ENCODE measurements at regions of chr14 and their contacts with region 1.

Region 1: GRCh38 chr14:56474419-56475022 is 105.1 kb upstream of the TMEM260 start:
- DNase-seq: peak in 1 of 2 experiments; percentile 59
- H3K4me3 ChIP-seq: no peak overlapping the region
- H3K4me3 Mint-ChIP-seq: no peak overlapping the region
- H3K27ac Mint-ChIP-seq: no peak overlapping the region
- H3K4me1 ChIP-seq: no peaks in the 10 kb centered on the region
- H3K4me1 Mint-ChIP-seq: no peaks in the 10 kb centered on the region
- H3K27me3 ChIP-seq: no peaks in the 10 kb centered on the region
- H3K27me3 Mint-ChIP-seq: peaks cover 23% of the 10 kb centered on the region
- CTCF ChIP-seq: peak; percentile 73 to 76

Region 2: GRCh38 chr14:55707365-55707804 is 767.1 kb before region 1 on chr14:
- CTCF ChIA-PET with region 1: interaction called, 11 read pairs
- POLR2A ChIA-PET with region 1: no interaction called
- intact Hi-C with region 1: loop called (anchors 2 kb)
- DNase-seq: peak in 1 of 2 experiments; percentile 32
- H3K4me3 ChIP-seq: no peak overlapping the region
- H3K4me3 Mint-ChIP-seq: no peak overlapping the region
- H3K27ac Mint-ChIP-seq: no peak overlapping the region
- H3K4me1 ChIP-seq: peaks cover 4% of the 10 kb centered on the region; the same call in 1 of the 2 replicates
- H3K4me1 Mint-ChIP-seq: no peaks in the 10 kb centered on the region
- H3K27me3 ChIP-seq: no peaks in the 10 kb centered on the region
- H3K27me3 Mint-ChIP-seq: no peaks in the 10 kb centered on the region
- CTCF ChIP-seq: peak; percentile 53 to 65

Region 3: DNA sequence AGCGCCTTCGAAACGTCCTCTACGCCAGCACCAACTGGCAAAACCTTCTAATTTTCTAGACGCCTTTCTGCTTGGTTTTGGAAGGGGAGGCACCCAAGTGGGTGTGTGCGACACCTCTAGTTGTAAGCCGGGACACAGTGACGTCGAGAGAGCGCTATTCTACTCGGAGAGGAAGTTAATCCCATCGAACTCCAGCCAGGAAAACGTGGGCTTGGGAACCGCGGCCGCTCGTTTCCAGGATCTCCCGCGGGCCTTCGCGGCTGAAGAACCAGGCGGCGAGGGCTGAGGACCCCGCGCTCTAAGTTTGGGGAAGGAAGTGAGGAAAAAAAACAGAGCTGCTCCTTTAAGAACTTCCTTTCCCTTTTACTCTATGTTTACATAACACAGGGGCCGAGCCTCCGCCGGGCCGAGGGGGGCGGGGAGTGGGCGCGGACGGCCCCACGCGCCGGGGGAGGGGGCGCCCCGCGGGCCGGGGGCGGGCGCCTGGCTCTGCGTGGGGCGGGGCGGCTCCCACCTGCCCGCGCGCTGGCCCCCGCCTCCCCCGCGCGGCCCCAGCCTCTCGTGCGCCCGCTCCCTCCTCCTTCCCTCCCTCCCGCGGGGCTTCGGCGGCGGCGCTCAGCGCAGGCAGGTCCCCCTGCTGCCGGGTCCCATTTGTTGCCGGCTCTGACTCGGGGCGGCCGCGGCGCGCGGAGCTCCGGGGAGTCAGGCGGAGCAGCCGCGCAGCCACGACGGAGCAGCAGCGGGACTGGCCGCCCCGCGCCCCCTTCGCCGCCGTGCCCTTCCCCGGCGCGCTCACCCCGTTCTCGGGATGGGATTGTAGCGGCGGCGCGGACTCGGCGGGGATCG is 356.5 kb before region 1 on chr14 and contains the start of gene PELI2:
- CTCF ChIA-PET with region 1: no interaction called
- POLR2A ChIA-PET with region 1: no interaction called
- intact Hi-C with region 1: loop called (anchors 10 kb)
- DNase-seq: peak; percentile 67 to 85
- H3K4me3 ChIP-seq: peak within 1 kb of the TSS; percentile 49
- H3K4me3 Mint-ChIP-seq: peak within 1 kb of the TSS; percentile 96
- H3K27ac Mint-ChIP-seq: no peak within 1 kb of the TSS
- H3K4me1 ChIP-seq: peaks cover 10% of the 10 kb centered on the region; the same call in 1 of the 2 replicates
- H3K4me1 Mint-ChIP-seq: peaks cover 24% of the 10 kb centered on the region
- H3K27me3 ChIP-seq: no peaks in the 10 kb centered on the region
- H3K27me3 Mint-ChIP-seq: peaks cover 11% of the 10 kb centered on the region
- CTCF ChIP-seq: peak in 1 of 2 experiments; percentile 19
- total RNA-seq, gene PELI2: 8.1 and 8.5 TPM in 2 replicates

Region 4: DNA sequence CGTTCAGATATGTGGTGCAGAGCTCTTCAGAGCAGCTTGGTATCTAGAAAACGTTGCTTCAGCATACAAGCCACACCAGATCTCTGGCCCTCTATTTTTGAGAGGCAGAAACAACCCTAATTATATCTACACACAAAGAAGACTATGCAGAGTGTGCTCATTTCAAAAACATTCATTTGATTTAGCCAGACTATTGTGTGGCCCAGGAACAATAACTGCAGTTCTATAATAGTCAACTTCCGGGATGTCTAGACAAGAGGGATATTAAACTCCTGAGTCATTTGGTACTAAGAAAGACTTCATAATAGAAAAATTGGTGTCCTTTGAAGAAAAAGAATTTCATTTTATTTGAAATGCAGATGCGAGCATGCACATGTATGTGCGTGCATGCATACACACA is 202.6 kb before region 1 on chr14:
- CTCF ChIA-PET with region 1: no interaction called
- POLR2A ChIA-PET with region 1: no interaction called
- intact Hi-C with region 1: no loop called
- DNase-seq: no peak
- H3K4me3 ChIP-seq: no peak overlapping the region
- H3K4me3 Mint-ChIP-seq: no peak overlapping the region
- H3K27ac Mint-ChIP-seq: no peak overlapping the region
- H3K4me1 ChIP-seq: no peaks in the 10 kb centered on the region
- H3K4me1 Mint-ChIP-seq: no peaks in the 10 kb centered on the region
- H3K27me3 ChIP-seq: no peaks in the 10 kb centered on the region
- H3K27me3 Mint-ChIP-seq: no peaks in the 10 kb centered on the region
- CTCF ChIP-seq: no peak

Region 5: DNA sequence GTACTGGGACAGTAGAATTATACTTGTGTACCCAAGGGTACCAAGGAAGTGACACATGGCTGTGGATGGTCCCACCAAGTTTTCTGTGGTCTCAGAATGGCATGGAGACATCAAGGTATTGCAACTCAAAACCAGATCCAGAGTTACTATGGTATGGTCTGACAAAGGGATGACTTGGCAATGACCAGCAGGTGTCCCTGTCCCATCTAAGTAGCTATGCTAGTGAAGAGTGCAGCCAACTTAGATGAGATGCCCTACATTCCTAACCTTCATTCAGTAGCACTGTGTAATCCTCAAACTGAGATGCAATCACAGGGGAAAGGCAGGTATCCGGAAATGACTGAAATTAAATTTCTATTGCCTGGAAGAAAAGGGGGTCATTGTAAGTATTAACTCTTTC is 83.7 kb before region 1 on chr14:
- CTCF ChIA-PET with region 1: interaction called, 17 read pairs
- POLR2A ChIA-PET with region 1: no interaction called
- intact Hi-C with region 1: loop called (anchors 1 kb)
- DNase-seq: peak in 1 of 2 experiments; percentile 6
- H3K4me3 ChIP-seq: no peak overlapping the region
- H3K4me3 Mint-ChIP-seq: no peak overlapping the region
- H3K27ac Mint-ChIP-seq: no peak overlapping the region
- H3K4me1 ChIP-seq: no peaks in the 10 kb centered on the region
- H3K4me1 Mint-ChIP-seq: no peaks in the 10 kb centered on the region
- H3K27me3 ChIP-seq: no peaks in the 10 kb centered on the region
- H3K27me3 Mint-ChIP-seq: peaks cover 7% of the 10 kb centered on the region
- CTCF ChIP-seq: peak in 1 of 2 experiments; percentile 39

Region 6: DNA sequence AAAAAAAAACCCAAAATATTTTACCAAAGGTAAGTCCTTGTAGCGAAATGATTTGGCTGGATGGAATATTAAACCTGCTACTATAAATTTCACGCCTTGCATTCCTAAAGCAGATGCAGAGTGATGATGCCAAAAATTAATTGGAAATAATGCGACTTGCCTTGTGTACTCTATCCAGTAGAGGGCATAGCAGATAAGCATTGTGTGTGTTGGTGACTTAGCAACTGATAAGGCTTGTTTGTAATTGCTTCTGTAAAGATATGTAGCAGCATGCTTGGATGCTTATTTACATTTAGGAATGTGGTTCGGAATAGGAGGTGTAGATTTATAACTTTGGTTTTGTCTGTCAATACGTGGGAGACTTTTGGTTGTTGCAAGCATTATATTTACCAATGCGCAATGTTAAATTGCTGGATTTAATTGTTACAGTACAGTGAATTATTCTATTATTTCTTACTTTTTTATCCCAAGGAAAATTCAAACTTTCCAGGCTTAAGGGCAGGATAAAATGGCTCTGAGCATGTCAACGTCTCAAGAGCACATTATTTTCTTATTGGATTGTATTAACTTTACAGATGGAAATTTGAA is 185.5 kb after region 1 on chr14:
- CTCF ChIA-PET with region 1: no interaction called
- POLR2A ChIA-PET with region 1: no interaction called
- intact Hi-C with region 1: no loop called
- DNase-seq: peak in 1 of 2 experiments; percentile 56
- H3K4me3 ChIP-seq: no peak overlapping the region
- H3K4me3 Mint-ChIP-seq: peak overlapping the region; percentile 48
- H3K27ac Mint-ChIP-seq: peak overlapping the region; percentile 14
- H3K4me1 ChIP-seq: peaks cover 35% of the 10 kb centered on the region
- H3K4me1 Mint-ChIP-seq: peaks cover 37% of the 10 kb centered on the region
- H3K27me3 ChIP-seq: no peaks in the 10 kb centered on the region
- H3K27me3 Mint-ChIP-seq: no peaks in the 10 kb centered on the region
- CTCF ChIP-seq: peak; percentile 70 to 78

Measured in Caco-2 (cell line).